RWPE1 (cell line): ENCODE measurements at regions of chr1 and their contacts with region 1.

Region 1: GRCh38 chr1:32650752-32651460 is at the start of gene RBBP4:
- DNase-seq: peak; percentile 98
- H3K27ac ChIP-seq: peak within 1 kb of the TSS; percentile 94
- CTCF ChIP-seq: no peak

Region 2: DNA sequence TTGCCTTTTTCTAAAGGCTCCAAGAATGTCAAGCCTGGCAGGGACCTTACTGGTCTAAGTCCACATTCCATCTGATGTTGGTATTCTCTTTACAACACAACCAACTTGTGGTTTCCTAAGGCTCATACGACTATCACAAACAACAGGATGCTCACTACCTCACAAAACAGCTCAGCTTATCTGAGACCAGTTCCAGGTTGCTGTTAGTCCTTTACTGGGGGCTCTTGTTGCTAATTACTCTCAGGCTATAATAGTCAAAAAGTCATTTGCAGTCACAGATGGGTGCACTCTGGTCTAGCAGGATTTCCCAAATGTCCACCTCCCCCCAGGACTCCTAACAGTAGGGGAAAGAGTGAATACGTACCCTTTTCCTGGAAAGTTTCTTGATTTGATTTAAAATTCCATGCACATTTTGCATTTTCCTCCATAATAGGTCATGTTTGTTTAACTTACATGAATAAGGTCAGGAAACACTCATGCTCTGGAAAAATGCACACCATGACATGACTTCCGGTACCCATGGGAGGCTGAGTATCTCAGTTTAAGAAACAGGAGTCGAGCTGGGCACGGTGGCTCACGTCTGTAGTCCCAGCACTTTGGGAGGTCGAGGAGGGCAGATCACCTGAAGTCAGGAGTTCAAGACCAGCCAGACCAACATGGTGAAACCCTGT is 383.9 kb before region 1 on chr1:
- CTCF ChIA-PET with region 1: no interaction called
- POLR2A ChIA-PET with region 1: interaction called, 10 read pairs
- DNase-seq: no peak
- H3K27ac ChIP-seq: no peak overlapping the region
- CTCF ChIP-seq: no peak

Region 3: DNA sequence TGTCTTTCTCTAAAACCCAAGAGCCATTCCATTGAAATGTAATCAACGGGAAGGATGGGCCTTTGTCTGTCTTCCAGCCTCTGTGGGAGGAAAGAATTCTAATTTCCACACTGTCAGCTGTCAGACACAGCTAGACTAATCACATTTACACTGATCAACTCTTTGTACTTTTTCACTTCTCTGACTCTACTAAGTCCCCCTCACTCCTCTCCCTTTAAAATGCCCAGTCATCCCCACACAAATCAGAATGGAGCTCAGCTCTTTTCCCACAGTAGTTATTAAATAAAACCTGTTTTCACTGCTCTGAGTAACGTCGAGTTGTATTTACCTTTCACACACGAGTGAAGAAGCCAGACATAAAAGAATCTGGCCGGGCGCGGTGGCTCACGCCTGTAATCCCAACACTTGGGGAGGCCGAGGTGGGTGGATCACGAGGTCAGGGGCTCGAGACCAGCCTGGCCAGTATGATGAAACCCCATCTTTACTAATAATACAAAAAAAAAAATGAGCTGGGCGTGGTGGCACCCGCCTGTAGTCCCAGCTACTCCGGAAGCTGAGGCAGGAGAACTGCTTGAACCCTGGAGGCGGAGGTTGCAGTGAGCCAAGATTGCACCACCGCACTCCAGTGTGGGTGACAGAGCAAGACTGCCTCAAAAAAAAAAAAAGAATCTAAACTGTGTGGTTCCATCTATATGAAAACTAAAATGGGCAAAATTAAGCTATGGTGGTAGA is 13.8 kb before region 1 on chr1:
- CTCF ChIA-PET with region 1: interaction called, 4 read pairs
- POLR2A ChIA-PET with region 1: interaction called, 10 read pairs
- DNase-seq: peak; percentile 6
- H3K27ac ChIP-seq: no peak overlapping the region
- CTCF ChIP-seq: no peak

Region 4: DNA sequence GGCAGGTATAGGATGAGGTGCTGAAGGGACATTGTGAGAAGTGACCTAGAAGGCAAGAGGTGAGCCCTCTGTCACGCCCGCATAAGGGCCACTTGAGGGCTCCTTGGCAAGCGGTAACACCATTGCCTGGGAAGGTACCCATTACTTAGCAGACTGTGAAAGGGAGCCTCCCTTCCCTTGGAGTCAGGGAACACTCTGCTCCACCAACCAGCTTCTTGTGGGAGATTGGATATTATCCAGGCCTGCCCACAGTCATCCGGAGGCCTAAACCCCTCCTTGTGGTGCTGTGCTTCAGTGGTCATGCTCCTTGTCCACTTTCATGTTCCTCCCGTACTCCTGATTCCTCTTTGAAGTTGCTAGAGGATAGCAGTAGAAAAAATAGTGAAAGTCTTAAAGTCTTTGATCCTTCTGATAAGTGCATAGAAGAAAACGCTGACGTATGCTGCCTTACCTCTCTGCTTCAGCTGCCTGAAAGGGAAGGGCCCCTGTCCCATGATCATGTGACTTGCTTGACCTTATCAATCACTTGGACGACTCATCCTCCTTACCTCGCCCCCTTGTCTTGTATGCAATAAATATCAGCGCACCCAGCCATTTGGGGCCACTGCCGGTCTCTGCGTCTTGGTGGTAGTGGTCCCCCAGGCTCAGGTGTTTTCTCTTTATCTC is 16.1 kb after region 1 on chr1:
- CTCF ChIA-PET with region 1: no interaction called
- POLR2A ChIA-PET with region 1: no interaction called
- DNase-seq: no peak
- H3K27ac ChIP-seq: no peak overlapping the region
- CTCF ChIP-seq: no peak